BJ (cell line): ENCODE measurements at regions of chr9 and their contacts with region 1.

Region 1: DNA sequence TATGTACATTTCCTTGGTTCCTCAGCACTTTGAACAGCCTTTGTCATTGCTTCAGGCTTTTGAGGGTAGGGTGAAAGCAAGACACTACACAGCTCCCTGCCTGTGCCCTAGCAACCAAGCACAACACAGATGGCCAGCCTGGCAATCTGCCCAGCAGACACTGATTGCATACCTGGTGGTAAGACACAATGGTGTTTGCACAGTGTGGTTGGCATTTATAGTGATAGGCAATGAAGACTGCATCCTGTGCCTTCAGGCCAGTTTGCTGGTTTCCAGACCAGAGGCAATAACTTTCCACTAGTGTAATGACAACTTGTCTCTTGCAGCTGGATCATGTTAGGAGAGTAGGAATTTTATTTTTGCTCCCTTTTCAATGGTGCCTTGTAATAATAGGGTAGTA is 144.5 kb upstream of the TNC start:
- DNase-seq: peak; percentile 90
- H3K4me3 ChIP-seq: no peak overlapping the region
- H3K27me3 ChIP-seq: no peaks in the 10 kb centered on the region
- CTCF ChIP-seq: no peak

Region 2: DNA sequence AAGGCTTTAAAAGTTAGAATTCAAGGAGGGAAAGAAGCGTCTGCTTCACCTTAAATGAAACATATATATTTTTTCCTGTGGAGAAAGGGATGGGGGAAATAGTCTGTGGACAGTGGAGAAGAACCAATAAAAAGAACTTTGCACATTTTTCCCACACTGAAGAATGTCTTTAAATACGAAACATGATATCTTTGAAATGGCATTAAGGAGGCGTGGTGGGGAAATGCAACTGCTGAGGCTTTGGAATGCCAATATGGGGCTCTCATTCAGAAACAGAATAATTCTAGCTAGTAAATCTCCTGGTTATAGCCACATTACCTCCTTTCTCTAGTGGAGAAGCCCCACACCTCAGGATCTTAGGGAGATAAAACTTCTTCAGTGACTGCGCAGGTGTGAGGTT is 191.3 kb before region 1 on chr9:
- CTCF ChIA-PET with region 1: no interaction called
- POLR2A ChIA-PET with region 1: no interaction called
- DNase-seq: peak; percentile 31
- H3K4me3 ChIP-seq: no peak overlapping the region
- H3K27me3 ChIP-seq: no peaks in the 10 kb centered on the region
- CTCF ChIP-seq: no peak

Region 3: GRCh38 chr9:115204904-115205453 is 57.5 kb before region 1 on chr9:
- CTCF ChIA-PET with region 1: interaction called, 14 read pairs
- POLR2A ChIA-PET with region 1: no interaction called
- DNase-seq: peak; percentile 64
- H3K4me3 ChIP-seq: no peak overlapping the region
- H3K27me3 ChIP-seq: no peaks in the 10 kb centered on the region
- CTCF ChIP-seq: no peak

Region 4: GRCh38 chr9:115341426-115341825 is 78.9 kb after region 1 on chr9:
- CTCF ChIA-PET with region 1: no interaction called
- POLR2A ChIA-PET with region 1: no interaction called
- DNase-seq: no peak
- H3K4me3 ChIP-seq: no peak overlapping the region
- H3K27me3 ChIP-seq: peaks cover 2% of the 10 kb centered on the region
- CTCF ChIP-seq: no peak

Region 5: GRCh38 chr9:115369322-115369957 is 107.0 kb after region 1 on chr9:
- CTCF ChIA-PET with region 1: no interaction called
- POLR2A ChIA-PET with region 1: interaction called, 19 read pairs
- DNase-seq: peak; percentile 58
- H3K4me3 ChIP-seq: no peak overlapping the region
- H3K27me3 ChIP-seq: no peaks in the 10 kb centered on the region
- CTCF ChIP-seq: no peak